Heart left ventricle (tissue), 16 donors: ENCODE measurements at regions of chr19 and their contacts with region 1.

Region 1: DNA sequence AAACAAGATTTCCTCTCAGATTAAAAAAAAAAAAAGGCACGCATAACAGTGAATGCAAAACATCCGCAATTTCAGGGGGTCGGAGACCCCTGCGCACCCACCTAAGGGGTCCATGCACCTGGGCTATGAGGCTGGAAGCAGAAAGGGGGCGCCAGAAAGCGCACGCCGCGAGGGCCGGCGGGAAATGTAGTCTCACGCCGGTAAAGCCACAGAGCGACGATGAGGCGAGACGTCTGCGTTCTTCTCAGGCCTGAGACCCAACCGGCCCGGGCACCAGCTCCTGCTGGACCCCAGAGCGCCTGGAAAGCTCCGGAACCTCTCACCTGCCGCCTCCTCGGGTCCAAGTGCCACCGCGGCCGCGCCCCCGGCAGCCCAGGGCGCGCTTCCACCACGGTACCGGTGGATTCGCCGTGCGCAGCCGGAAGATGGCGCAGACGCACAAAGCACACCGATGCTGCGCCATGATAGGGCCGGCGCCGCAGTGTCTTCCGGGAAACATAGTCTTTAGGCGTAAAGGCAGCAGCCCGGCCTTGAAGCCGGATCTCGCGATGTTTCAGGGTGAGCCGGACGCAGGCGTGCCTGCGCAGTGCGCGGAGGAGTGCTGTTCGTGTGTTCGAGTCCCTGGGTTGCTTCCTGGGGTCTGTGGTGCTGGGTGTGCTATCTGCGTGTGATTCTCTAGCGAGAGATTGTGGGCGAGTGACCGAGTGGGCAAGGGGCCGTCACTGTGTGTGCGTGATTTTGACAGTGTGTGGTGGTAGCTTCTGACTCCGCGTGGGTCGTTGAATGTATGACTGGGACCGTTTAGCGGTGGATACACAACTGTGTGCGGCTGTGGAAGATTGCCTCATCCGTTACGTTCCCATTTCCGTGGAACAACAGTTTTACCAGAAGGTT is at the start of gene ZNF582:
- DNase-seq: peak; percentile 97 to 99 (median 98)
- ATAC-seq: peak; percentile 99 to 100 (median 99)
- H3K4me3 ChIP-seq: peak within 1 kb of the TSS; percentile 63 to 88 (median 74)
- H3K27ac ChIP-seq: peak within 1 kb of the TSS; percentile 76 to 99 (median 96)
- H3K4me1 ChIP-seq: peaks cover 0 to 19% (median 8%) of the 10 kb centered on the region in 12 donors
- H3K27me3 ChIP-seq: no peaks in the 10 kb centered on the region
- CTCF ChIP-seq: peak; percentile 68 to 97 (median 84)
- POLR2A ChIP-seq: peak in 1 of 2 donors; percentile 60
- total RNA-seq, gene ZNF582: 3.5 to 6.2 (median 4.7) TPM

Region 2: GRCh38 chr19:56314562-56315077 is 78.7 kb before region 1 on chr19 and contains the start of gene ZSCAN5A:
- intact Hi-C with region 1: loop called in 1 of 10 experiments (anchors 2 kb)
- DNase-seq: peak; percentile 97 to 99 (median 98)
- ATAC-seq: peak; percentile 94 to 95 (median 94)
- H3K4me3 ChIP-seq: peak within 1 kb of the TSS; percentile 50 to 88 (median 70)
- H3K27ac ChIP-seq: peak within 1 kb of the TSS; percentile 88 to 99 (median 96)
- H3K4me1 ChIP-seq: peaks cover 0 to 46% (median 18%) of the 10 kb centered on the region in 12 donors
- H3K27me3 ChIP-seq: no peaks in the 10 kb centered on the region
- CTCF ChIP-seq: peak in 1 of 12 donors; percentile 9
- POLR2A ChIP-seq: no peak
- total RNA-seq, gene ZSCAN5A: 3.3 to 26.6 (median 18.1) TPM

Region 3: DNA sequence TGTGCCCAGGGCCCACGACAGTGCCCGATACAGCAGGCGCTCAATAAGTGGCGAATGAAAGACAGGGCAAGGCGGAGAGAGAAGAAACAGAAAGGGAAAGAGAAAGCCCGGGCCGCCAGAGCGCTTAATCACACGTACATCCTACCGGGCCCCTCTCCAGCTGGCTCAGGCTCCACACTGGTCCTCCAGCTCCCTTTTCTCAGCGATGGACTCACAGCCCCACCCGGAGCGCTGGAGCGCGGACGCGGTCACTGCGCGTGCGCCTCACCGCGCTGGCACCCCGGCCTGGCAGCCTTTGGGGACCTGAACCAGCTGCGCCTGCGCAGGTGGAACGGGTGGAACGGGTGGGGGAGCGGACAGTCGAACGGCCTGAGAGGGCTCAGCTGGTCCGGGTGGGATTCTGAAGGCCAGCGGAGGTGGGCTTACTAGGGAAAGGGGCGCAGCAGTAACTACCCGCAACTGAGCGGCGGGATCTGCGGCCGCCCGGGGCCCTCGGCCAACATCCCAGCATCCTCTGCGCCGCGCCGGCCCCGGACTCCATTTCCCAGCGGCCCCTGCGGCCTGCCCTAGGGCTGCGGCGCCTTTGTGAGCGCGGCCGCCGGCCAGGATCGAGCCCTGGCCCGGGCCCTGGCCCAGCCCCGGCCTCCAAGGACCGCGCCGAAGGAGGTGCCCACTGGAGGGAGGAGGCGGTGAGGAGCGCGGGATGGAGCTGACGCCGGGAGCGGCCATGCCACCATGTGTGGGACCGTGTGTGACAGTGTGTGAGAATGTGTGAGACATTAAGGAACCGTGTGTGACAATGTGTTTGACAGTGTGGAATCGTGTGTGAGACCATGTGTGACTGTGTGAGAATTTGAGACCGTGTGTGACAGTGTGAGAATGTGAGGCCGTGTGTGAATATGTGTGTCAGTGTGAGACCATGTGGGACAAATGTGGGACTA is 10.7 kb after region 1 on chr19 and contains the start of gene ZNF583:
- intact Hi-C with region 1: loop called in 2 of 10 experiments (anchors 1 kb)
- DNase-seq: peak; percentile 96 to 98 (median 98)
- ATAC-seq: peak; percentile 95 to 99 (median 98)
- H3K4me3 ChIP-seq: peak within 1 kb of the TSS; percentile 51 to 91 (median 72)
- H3K27ac ChIP-seq: peak within 1 kb of the TSS; percentile 89 to 99 (median 96)
- H3K4me1 ChIP-seq: peaks cover 0 to 19% (median 14%) of the 10 kb centered on the region in 12 donors
- H3K27me3 ChIP-seq: no peaks in the 10 kb centered on the region
- CTCF ChIP-seq: peak in 1 of 12 donors; percentile 8
- POLR2A ChIP-seq: peak in 1 of 2 donors; percentile 60
- total RNA-seq, gene ZNF583: 4.1 to 7.9 (median 5.4) TPM

Region 4: DNA sequence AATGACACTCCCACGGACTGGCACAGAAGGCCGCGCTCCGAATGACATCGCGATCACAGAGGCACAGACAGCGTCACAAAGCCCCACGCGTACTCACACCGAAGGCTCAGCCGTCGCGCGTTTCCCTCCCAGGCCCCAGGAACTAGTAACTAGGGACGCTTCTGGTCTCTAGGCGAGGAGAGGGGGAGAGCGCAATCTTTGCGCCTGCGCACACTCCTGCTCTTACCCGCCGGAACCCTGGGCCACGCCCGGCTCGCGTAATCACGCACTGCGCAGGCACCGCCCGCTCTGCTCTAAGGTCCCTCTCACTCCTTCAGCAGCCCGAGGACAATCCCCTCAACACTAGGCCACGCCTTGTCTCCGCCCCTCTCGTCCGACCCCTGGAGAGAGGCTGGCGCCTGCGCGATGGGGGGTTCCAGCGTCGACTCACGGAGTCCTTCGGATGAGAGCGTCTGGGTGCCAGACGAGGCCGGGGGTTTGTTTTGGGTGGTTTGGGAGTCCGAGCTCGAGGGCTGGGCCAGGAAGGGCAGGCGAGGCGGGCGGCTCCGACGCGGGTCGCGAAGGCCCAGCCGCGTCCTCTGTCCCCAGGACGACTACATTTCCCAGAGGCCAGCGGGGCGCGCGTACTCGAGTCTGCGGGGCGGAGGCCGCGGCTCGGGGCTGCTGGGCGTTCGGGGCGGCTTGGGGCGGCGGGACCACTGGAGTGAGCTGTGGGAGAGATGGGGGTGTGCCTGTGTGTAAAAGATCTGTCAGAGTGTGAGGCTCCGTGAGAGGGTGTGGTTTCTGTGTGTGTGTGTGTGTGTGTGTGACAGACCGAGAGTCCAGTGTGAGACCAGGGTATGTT is 114.3 kb after region 1 on chr19 and contains the start of gene ZNF471:
- intact Hi-C with region 1: loop called in 2 of 10 experiments (anchors 10 kb)
- DNase-seq: peak; percentile 99 to 100 (median 99)
- ATAC-seq: peak; percentile 100
- H3K4me3 ChIP-seq: peak within 1 kb of the TSS; percentile 35 to 87 (median 73)
- H3K27ac ChIP-seq: peak within 1 kb of the TSS; percentile 90 to 100 (median 98)
- H3K4me1 ChIP-seq: peaks cover 0 to 13% (median 6%) of the 10 kb centered on the region in 12 donors
- H3K27me3 ChIP-seq: no peaks in the 10 kb centered on the region
- CTCF ChIP-seq: no peak
- POLR2A ChIP-seq: peak in 1 of 2 donors; percentile 62
- total RNA-seq, gene ZNF471: 3.3 to 7.9 (median 4.7) TPM

Region 5: DNA sequence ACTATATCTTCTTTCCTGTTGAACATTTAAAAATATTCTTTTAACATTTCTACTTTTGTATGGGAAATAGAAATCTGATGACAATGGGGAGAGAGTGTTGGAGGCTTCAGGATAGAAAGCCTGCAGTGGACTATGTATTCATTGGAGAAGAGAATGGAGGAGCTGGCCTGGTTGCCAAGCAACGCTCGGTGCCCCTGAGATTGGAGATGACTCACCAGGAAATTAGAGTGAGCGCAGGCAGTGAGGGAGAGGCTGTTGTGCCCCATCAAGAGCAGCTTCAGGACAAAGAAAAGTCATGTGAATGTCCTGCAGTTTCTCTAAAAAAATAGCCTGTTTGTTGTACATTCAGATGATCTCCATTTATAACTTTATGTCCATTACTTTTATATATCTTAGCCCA is 326.9 kb after region 1 on chr19:
- intact Hi-C with region 1: loop called in 1 of 10 experiments (anchors 5 kb)
- DNase-seq: peak in 2 of 5 donors; percentile 10 to 30
- ATAC-seq: peak in 1 of 4 donors; percentile 58
- H3K4me3 ChIP-seq: no peak overlapping the region
- H3K27ac ChIP-seq: no peak overlapping the region
- H3K4me1 ChIP-seq: no peaks in the 10 kb centered on the region
- H3K27me3 ChIP-seq: peaks cover 0 to 10% (median 0%) of the 10 kb centered on the region in 9 donors
- CTCF ChIP-seq: no peak
- POLR2A ChIP-seq: no peak